H1 (cell line): ENCODE measurements at regions of chr13 and their contacts with region 1.

Region 1: DNA sequence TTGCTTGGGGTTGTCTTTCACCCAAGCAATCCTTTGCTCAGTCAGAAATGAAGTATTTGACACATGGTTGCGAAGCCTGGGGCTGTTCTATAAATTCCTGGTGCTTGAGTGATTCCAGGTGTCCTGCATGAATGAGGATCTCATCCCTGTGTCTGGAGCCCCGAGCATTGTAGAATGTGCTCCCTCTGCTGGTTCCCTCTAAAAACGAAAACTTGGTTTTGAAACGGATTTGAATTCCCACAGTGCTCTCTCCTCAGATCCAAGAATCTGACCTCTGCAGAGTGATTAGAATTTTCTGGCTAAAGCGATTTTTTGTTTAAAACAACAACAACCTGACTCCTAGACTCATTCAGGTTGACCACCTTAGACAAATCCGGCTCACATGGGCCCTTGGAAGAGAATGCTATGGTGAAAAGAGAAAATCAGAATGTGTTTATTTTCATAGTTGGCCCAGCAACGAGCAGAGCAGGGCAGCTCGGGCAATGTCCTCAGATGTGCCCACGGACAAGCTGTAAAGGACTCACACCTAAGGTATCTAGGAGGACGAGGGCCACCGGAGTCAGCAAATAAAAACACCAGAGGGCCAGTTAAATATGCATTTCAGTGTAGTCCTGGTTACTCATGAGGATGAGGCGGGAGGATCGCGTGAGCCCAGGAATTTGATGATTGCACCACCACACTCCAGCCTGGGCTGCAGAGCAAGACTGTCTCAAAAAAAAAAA is 8.7 kb upstream of the ATP12A start:
- DNase-seq: no peak
- H3K4me3 ChIP-seq: peak overlapping the region in 1 of 4 experiments; percentile 41; a peak in 3 of 8 replicates
- H3K27ac ChIP-seq: no peak overlapping the region
- H3K4me1 ChIP-seq: peaks cover 0 to 4% (median under 1%) of the 10 kb centered on the region in 4 experiments; a peak in 2 of 7 replicates
- H3K27me3 ChIP-seq: no peaks in the 10 kb centered on the region
- CTCF ChIP-seq: peak; percentile 17 to 79 (median 75)
- EP300 ChIP-seq: no peak
- POLR2A ChIP-seq: no peak
- RAD21 ChIP-seq: peak; percentile 57 to 67

Region 2: GRCh38 chr13:24360106-24360505 is 311.4 kb before region 1 on chr13:
- CTCF ChIA-PET with region 1: no interaction called
- POLR2A ChIA-PET with region 1: no interaction called
- DNase-seq: no peak
- H3K4me3 ChIP-seq: no peak overlapping the region
- H3K27ac ChIP-seq: no peak overlapping the region
- H3K4me1 ChIP-seq: no peaks in the 10 kb centered on the region
- H3K27me3 ChIP-seq: peaks cover 0 to 2% (median 0%) of the 10 kb centered on the region in 4 experiments; a peak in 1 of 7 replicates
- CTCF ChIP-seq: no peak
- EP300 ChIP-seq: no peak
- POLR2A ChIP-seq: no peak
- RAD21 ChIP-seq: no peak

Region 3: DNA sequence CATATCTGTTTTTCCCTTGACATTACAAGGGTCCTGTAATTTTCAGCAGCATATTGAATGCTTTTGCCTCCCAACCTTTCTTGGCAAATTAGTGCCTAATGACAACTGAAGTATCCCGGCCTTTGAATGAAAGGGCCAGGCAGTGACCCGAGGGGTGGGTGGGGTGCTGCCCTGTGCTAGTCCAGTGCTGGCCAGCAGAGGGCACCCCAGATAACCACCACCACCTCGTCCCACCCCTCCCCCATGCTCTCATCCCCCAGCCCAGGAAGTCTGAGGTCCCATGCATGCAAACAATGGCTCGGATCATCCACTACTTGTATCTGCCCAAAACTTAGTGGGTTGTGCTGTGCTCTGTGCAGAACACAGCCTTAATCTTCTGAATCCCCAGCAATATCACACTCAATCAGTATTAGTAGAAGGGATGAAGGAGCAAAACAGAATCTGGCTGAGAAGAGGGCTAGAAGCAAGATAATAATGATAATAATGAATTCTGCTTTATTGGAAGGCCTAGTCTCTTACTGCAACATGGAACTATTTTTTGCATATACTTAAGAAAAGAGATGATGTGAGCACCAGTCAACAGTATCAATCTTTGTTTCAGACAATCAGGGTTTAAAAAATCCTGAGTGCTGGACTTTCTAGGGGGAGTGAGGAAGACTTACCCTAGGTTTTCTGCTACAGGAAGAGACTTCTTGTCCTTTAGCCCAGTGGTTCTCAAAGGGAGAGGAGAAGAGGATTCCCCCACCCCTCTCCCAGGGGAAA is 12.5 kb after region 1 on chr13:
- CTCF ChIA-PET with region 1: interaction called, 13 read pairs
- POLR2A ChIA-PET with region 1: interaction called, 3 read pairs
- DNase-seq: peak in 1 of 2 experiments; percentile 88
- H3K4me3 ChIP-seq: peak overlapping the region in 1 of 4 experiments; percentile 11; a peak in 1 of 8 replicates
- H3K27ac ChIP-seq: no peak overlapping the region
- H3K4me1 ChIP-seq: peaks cover 8 to 14% (median 12%) of the 10 kb centered on the region in 4 experiments
- H3K27me3 ChIP-seq: peaks cover 3 to 22% (median 18%) of the 10 kb centered on the region in 4 experiments
- CTCF ChIP-seq: peak; percentile 80 to 96 (median 80)
- EP300 ChIP-seq: no peak
- POLR2A ChIP-seq: no peak
- RAD21 ChIP-seq: peak; percentile 58 to 69

Region 4: DNA sequence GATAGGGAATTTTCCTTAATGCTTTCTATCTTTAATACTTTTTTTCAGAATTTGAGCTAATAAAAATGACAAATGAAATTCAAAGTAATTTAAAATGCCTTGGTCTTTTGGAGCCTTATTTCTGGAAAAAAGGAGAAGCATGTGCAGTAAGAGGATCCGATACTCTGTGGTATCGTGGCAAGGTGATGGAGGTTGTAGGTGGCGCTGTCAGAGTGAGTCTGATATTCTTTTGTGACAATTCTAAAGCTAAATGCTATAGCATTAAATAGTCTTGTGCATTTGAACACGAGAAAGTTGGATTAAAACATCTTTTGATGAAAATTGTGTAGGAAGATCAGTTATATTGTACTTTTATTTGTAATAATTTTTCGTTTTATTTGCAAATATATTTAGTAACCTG is 187.4 kb after region 1 on chr13:
- CTCF ChIA-PET with region 1: no interaction called
- POLR2A ChIA-PET with region 1: no interaction called
- DNase-seq: no peak
- H3K4me3 ChIP-seq: no peak overlapping the region
- H3K27ac ChIP-seq: no peak overlapping the region
- H3K4me1 ChIP-seq: no peaks in the 10 kb centered on the region; a peak in 2 of 7 replicates
- H3K27me3 ChIP-seq: no peaks in the 10 kb centered on the region
- CTCF ChIP-seq: no peak
- EP300 ChIP-seq: no peak
- POLR2A ChIP-seq: no peak
- RAD21 ChIP-seq: no peak